Mucosa of descending colon (tissue), 3 donors: ENCODE measurements at regions of chr13 and their contacts with region 1.

Region 1: DNA sequence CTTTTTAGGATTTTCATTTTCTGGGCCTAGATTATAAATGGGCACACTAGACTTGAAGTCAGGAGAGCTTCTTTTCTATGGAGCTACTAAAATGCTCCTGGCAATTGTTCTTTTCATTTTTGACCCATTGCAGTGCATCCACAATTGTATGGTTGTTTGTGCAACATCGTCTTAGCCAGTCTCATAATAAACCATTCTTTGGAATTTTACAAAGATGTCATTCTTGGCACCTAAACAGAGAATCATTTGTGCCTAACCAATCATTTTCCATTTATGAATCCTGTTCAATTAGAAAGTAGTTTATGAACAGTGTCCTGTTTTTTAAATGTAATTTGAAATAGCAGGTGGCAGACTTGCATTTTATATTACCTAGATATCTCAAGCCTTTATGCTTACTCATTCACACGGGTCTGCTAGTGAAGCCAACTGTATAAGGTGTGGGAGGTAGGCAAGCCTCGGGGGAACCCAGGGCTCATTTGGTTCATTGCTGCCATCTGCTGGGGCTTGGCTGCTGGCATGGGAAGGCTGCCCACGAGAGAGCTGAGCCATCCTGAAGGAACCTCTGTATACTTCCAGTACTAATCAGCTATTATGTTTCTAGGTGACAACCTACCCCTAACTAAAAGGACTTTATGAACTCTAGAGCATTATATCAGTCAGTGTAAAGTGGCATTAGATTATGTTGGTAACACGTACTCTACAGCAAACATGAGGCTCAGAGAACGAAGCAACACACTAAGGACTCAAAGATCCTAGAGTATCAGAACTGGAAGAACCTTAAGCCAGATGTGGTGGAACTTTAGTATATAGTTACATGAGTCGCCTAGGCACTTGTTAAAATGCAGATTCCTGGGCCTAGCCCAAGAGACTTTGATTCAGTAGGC is 60.0 kb downstream of the TPT1 start:
- DNase-seq: peak; percentile 60 to 90 (median 86)
- ATAC-seq: peak; percentile 100
- H3K4me3 ChIP-seq: no peak overlapping the region
- H3K4me1 ChIP-seq: no peaks in the 10 kb centered on the region
- CTCF ChIP-seq: peak; percentile 49

Region 2: DNA sequence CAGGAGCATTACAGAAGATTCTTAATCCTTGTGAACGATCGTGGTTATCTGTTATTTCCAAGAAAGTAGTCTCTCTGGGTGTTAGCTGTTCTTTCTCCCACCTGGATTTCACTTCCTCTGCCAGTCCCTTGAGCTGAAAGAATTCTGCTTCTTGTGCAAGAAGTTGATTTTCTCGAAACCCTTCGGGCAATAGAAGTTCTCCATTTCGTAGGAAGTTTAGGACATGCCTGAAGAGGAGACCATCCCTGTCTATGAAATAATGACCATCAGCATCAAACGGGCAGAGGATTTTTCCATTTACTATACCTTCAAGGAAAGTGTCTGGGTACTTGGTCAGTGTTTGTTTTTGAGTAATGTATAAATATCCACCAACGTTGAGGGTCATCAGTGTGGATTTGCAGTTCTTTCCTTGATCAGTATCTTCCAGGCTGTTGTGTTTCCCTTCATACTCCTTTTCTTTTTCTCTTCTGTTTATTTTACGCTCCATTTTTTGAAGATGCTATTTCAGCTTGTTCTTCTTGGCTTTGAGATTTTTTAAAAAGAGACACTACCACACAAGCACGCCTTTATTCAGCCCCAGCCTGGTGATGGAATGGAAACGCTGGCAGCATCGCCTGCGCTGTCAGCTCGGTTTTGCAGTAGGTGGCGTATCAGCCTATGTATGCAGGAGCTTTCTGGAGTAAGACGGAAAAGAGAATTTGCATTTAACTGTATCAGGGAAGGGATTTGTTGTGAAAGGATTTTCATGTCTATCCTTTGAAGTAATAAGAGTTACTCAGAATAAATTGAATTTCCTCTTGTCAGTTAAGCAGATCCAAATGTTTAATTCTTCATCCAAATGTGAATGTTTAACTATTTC is 86.7 kb before region 1 on chr13:
- intact Hi-C with region 1: loop called in 1 of 2 experiments (anchors 5 kb)
- DNase-seq: peak in 1 of 3 donors; percentile 31
- ATAC-seq: no peak
- H3K4me3 ChIP-seq: no peak overlapping the region
- H3K4me1 ChIP-seq: no peaks in the 10 kb centered on the region
- CTCF ChIP-seq: no peak